ENCODE measurements at regions of chr9 and their contacts with region 1.

Region 1: GRCh38 chr9:136807281-136808074 is at the start of gene RABL6:
- DNase-seq: peak; percentile 97
- H3K27ac ChIP-seq: peak within 1 kb of the TSS; percentile 91
- CTCF ChIP-seq: no peak

Region 2: GRCh38 chr9:136790927-136791641 is 16.4 kb before region 1 on chr9 and contains the start of gene TMEM141:
- CTCF ChIA-PET with region 1: interaction called, 16 read pairs
- POLR2A ChIA-PET with region 1: interaction called, 5 read pairs
- DNase-seq: peak; percentile 100
- H3K27ac ChIP-seq: peak within 1 kb of the TSS; percentile 89
- CTCF ChIP-seq: no peak

Measured in RWPE1 (cell line).